Left colon (tissue), 2 donors: ENCODE measurements at regions of chr6 and their contacts with region 1.

Region 1: GRCh38 chr6:122381497-122382265 is 17.8 kb upstream of the HSF2 start:
- DNase-seq: peak; percentile 32
- ATAC-seq: peak; percentile 77

Region 2: DNA sequence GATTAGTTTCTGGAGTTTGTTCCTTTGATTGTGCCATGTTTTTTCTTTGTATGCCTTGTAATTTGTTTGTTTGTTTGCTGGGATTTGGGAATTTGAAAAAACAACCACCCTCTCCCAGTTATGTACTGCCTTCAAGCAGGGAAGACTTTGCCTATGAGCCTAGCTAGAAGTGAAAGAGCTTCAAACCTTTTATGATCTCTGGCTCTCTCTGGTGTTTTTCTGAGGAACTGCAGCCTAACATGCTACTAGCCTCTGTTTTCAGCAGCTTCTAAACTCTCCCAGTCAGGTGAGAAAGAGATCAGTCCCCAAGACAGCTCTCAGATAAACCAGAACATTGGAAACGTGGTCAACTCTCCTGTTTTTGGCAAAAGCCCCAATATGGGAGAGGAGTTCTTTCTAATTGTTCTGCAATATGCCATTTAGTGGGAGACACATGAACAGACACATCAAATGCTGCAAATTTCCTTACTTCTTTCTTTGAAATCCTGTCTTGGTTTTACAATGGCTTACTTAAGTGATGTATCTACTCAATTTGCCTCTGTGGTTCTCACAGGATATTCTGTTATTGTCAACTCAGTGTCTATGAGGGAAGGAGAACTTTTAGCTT is 148.9 kb after region 1 on chr6:
- intact Hi-C with region 1: loop called in 1 of 2 experiments (anchors 5 kb)
- DNase-seq: peak in 1 of 2 donors; percentile 39
- ATAC-seq: peak; percentile 94